ENCODE measurements at regions of chr12 and their contacts with region 1.

Region 1: GRCh38 chr12:52879394-52880351 is 25.2 kb downstream of the KRT8 start:
- DNase-seq: peak; percentile 82 to 98
- ATAC-seq: peak; percentile 88 to 90
- H3K4me3 ChIP-seq: 0 out of 3 replicates have a peak overlapping the region, but pooled peaks have one; percentile 14
- H3K27ac ChIP-seq: peak overlapping the region; percentile 94 to 97
- H3K4me1 ChIP-seq: peaks cover 61% of the 10 kb centered on the region
- CTCF ChIP-seq: peak; percentile 97
- EP300 ChIP-seq: no peak
- POLR2A ChIP-seq: 0 out of 2 replicates have a peak, but pooled peaks have one; percentile 23
- RAD21 ChIP-seq: peak; percentile 90 to 99

Region 2: GRCh38 chr12:52130711-52131110 is 749.0 kb before region 1 on chr12:
- CTCF ChIA-PET with region 1: interaction called, 183 read pairs
- POLR2A ChIA-PET with region 1: no interaction called
- DNase-seq: no peak
- ATAC-seq: no peak
- H3K4me3 ChIP-seq: no peak overlapping the region
- H3K27ac ChIP-seq: no peak overlapping the region
- H3K4me1 ChIP-seq: no peaks in the 10 kb centered on the region
- CTCF ChIP-seq: no peak
- EP300 ChIP-seq: no peak
- POLR2A ChIP-seq: no peak
- RAD21 ChIP-seq: no peak

Region 3: DNA sequence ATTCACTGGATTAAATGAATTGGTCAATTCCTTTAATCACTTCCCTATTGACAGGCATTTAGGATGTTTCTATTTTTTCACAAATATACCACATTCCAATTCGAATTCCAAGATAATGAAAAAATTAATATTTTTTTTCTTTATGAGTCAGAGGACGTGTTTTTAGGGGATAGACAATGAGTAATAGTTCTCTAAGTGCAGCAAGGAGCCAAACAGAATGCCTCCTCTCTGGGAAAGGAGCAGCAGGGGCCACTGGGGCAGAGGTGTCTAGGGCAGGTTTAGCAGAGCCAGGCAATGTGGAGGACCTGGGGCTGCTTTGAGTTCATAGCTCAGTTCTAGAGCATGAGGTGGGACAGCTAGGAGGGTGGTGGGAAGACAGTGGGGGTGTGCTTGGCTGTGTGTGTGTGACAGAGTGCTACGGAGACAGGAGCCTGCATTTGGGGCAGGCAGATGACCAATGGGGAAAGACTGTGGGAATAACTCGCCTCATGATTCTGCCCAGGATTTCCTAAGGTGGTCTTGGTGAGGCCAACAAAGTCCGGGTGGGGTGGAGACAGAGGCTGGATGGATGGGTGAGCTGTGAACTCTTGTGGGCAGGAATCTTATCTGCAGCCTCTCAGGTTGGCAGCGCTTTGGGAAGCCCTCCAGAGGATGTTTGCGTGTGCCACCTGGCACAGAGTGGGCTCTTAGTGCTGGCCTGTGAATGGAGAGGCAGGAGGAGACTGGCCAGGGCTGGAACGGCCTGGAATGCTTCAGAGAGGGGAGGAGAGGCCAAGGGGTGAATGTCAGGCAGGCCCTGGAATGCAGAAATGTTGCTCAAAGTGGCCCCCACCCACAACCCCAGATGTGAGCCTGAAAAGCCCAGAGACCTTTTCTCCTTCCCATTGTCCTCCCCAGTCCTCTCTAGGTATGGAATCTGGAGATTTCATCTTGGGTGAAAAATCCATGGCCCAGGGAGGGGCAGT is 649.1 kb before region 1 on chr12:
- CTCF ChIA-PET with region 1: interaction called, 10 read pairs
- POLR2A ChIA-PET with region 1: no interaction called
- DNase-seq: peak in 1 of 2 experiments; percentile 76
- ATAC-seq: peak; percentile 30 to 55; a peak in 3 of 6 replicates
- H3K4me3 ChIP-seq: no peak overlapping the region
- H3K27ac ChIP-seq: peak overlapping the region; percentile 97
- H3K4me1 ChIP-seq: peaks cover 48% of the 10 kb centered on the region
- CTCF ChIP-seq: no peak
- EP300 ChIP-seq: peak; percentile 67 to 71; a peak in 2 of 5 replicates
- POLR2A ChIP-seq: no peak
- RAD21 ChIP-seq: 0 out of 5 replicates have a peak, but pooled peaks of 1 of the 2 experiments have one; percentile 14

Region 4: GRCh38 chr12:52295663-52296062 is 584.0 kb before region 1 on chr12:
- CTCF ChIA-PET with region 1: interaction called, 14 read pairs
- POLR2A ChIA-PET with region 1: no interaction called
- DNase-seq: no peak
- ATAC-seq: no peak
- H3K4me3 ChIP-seq: no peak overlapping the region
- H3K27ac ChIP-seq: peak overlapping the region in 1 of 2 experiments; percentile 19; a peak in 1 of 6 replicates
- H3K4me1 ChIP-seq: peaks cover 28% of the 10 kb centered on the region
- CTCF ChIP-seq: no peak
- EP300 ChIP-seq: no peak
- POLR2A ChIP-seq: no peak
- RAD21 ChIP-seq: no peak

Region 5: DNA sequence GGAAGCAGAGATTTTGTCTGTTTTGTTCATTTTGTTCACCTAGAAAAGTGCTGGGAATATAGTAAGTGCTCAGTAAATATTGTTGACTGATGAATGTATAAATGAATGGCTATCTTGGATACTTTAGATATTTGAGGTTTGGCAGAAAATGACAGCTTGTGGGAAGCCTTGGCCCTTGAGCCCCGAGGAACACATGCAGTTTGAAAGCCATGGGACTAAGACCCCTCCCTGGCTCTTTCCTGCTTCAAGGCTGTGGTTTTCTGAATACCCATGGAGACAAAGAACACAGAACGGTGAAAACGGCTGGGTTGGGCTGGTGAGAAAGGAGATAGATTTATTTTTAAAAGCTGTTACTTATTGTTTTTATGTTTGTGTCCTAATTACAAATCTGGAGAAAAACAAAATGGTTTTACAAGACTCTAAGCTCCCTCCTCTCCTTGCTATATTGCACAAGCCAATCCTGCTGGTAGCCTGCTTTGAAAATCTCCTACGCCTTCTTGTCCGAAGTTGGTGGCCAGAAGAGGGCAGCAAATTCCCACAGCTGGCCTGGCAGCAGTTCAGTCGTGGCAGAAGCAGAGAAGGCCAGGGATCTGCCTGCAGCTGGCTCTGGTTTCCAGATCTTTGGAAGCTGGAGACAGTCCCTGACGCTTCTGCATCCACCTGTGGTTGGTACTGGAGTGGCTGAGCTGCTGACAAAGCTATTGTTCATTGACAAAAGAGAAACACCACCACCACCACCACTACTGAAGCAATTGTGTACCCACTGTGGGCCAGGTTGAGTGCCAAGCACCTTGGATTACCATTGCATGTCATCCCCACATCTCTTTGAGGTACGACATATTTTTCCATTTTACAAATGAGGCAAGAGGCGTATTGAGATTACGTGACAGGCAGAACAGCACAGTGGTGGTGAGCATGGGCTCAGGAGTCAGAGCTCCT is 507.2 kb before region 1 on chr12:
- CTCF ChIA-PET with region 1: interaction called, 1,221 read pairs
- POLR2A ChIA-PET with region 1: interaction called, 6 read pairs
- DNase-seq: peak; percentile 93 to 95
- ATAC-seq: peak; percentile 95 to 97
- H3K4me3 ChIP-seq: no peak overlapping the region
- H3K27ac ChIP-seq: peak overlapping the region; percentile 34 to 67
- H3K4me1 ChIP-seq: peaks cover 10% of the 10 kb centered on the region; the same call in 1 of the 3 replicates
- CTCF ChIP-seq: peak; percentile 96
- EP300 ChIP-seq: no peak
- POLR2A ChIP-seq: no peak
- RAD21 ChIP-seq: peak; percentile 97 to 99

Region 6: GRCh38 chr12:52851787-52852186 is 27.9 kb before region 1 on chr12:
- CTCF ChIA-PET with region 1: interaction called, 13 read pairs
- POLR2A ChIA-PET with region 1: no interaction called
- DNase-seq: no peak
- ATAC-seq: no peak
- H3K4me3 ChIP-seq: no peak overlapping the region
- H3K27ac ChIP-seq: no peak overlapping the region
- H3K4me1 ChIP-seq: peaks cover 9% of the 10 kb centered on the region
- CTCF ChIP-seq: no peak
- EP300 ChIP-seq: no peak
- POLR2A ChIP-seq: no peak
- RAD21 ChIP-seq: no peak

Region 7: GRCh38 chr12:52980693-52981423 is 101.2 kb after region 1 on chr12:
- CTCF ChIA-PET with region 1: interaction called, 1,736 read pairs
- POLR2A ChIA-PET with region 1: interaction called, 15 read pairs
- DNase-seq: peak; percentile 89 to 97
- ATAC-seq: peak; percentile 76 to 84
- H3K4me3 ChIP-seq: no peak overlapping the region
- H3K27ac ChIP-seq: peak overlapping the region; percentile 39 to 91
- H3K4me1 ChIP-seq: peaks cover 28% of the 10 kb centered on the region
- CTCF ChIP-seq: peak; percentile 100
- EP300 ChIP-seq: no peak
- POLR2A ChIP-seq: no peak
- RAD21 ChIP-seq: peak; percentile 100

Region 8: DNA sequence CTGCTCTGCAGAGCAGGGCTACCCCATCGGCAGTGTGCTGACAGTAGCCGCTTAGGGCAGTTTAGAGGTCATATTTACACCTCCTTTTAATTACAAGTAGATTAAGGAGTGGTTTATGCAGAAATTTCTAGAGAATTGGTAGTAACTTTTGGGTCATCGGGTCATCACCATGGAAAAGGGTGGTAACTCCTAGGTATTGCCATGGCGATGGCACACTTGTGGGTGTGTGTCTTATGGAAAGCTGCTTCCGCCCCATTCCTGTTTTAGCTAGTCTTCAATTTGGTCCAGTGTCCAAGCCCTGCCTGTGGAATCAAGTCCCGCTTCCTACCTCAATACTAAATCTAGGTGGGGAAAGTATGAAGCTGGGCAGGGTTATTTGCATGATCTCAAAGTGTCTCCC is 271.4 kb after region 1 on chr12:
- CTCF ChIA-PET with region 1: no interaction called
- POLR2A ChIA-PET with region 1: no interaction called
- DNase-seq: no peak
- ATAC-seq: no peak
- H3K4me3 ChIP-seq: no peak overlapping the region
- H3K27ac ChIP-seq: no peak overlapping the region
- H3K4me1 ChIP-seq: no peaks in the 10 kb centered on the region
- CTCF ChIP-seq: no peak
- EP300 ChIP-seq: no peak
- POLR2A ChIP-seq: no peak
- RAD21 ChIP-seq: no peak

Measured in A549 (cell line).